Uterus (tissue), 4 donors: ENCODE measurements at regions of chr9 and their contacts with region 1.

Region 1: DNA sequence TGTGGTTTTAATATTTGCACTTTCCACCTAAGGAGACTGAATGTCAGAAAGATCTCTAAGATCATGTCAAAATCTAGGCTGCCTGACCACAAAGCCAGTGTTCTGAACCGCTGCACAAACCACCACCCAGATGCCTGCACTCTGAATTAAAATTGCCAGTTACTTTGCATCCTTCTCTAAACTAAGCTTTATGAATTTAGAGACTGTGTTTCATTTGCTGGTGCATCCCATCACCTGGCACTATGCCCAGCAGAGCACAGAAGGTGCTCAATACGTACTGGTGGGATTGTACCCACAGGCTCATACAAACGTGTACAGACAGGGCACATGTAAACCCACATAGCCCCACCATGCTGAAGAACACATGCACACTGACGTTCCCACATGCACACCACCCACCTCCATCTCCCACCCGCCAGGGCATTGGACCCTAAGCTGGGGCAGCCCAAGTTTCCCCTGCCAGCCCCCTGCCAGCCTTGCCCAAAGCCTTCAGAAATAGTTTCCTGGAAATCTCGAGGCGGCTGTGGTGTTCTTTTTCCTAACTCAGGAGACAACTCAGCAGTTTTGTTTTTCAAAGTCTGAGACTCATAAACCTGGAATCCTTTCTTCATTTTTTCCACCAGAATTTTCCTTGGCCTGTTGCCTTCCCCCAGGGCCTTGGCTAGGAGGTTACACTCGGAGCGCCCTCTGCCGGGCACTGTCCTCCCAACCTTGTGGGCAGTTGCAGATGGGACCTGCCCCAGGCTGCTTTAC is 9.6 kb upstream of the TRAF1 start:
- DNase-seq: peak; percentile 94 to 97
- H3K4me3 ChIP-seq: peak overlapping the region in 1 of 2 donors; percentile 9
- H3K27ac ChIP-seq: peak overlapping the region; percentile 83 to 92
- H3K4me1 ChIP-seq: peaks cover 12 to 15% of the 10 kb centered on the region in 2 donors
- H3K27me3 ChIP-seq: no peaks in the 10 kb centered on the region
- CTCF ChIP-seq: peak; percentile 91 to 96 (median 93)
- POLR2A ChIP-seq: no peak

Region 2: GRCh38 chr9:120434532-120434931 is 501.7 kb before region 1 on chr9:
- intact Hi-C with region 1: no loop called
- DNase-seq: no peak
- H3K4me3 ChIP-seq: no peak overlapping the region
- H3K27ac ChIP-seq: no peak overlapping the region
- H3K4me1 ChIP-seq: no peaks in the 10 kb centered on the region
- H3K27me3 ChIP-seq: no peaks in the 10 kb centered on the region
- CTCF ChIP-seq: no peak
- POLR2A ChIP-seq: no peak

Region 3: GRCh38 chr9:120875954-120876841 is 60.0 kb before region 1 on chr9:
- intact Hi-C with region 1: loop called (anchors 5 kb)
- DNase-seq: peak; percentile 88 to 89
- H3K4me3 ChIP-seq: peak overlapping the region; percentile 72 to 98
- H3K27ac ChIP-seq: peak overlapping the region; percentile 89 to 100
- H3K4me1 ChIP-seq: no peaks in the 10 kb centered on the region
- H3K27me3 ChIP-seq: no peaks in the 10 kb centered on the region
- CTCF ChIP-seq: peak in 2 of 4 experiments; percentile 2 to 11
- POLR2A ChIP-seq: peak; percentile 17 to 32

Region 4: GRCh38 chr9:121009650-121010049 is 73.5 kb after region 1 on chr9:
- intact Hi-C with region 1: no loop called
- DNase-seq: no peak
- H3K4me3 ChIP-seq: no peak overlapping the region
- H3K27ac ChIP-seq: no peak overlapping the region
- H3K4me1 ChIP-seq: no peaks in the 10 kb centered on the region
- H3K27me3 ChIP-seq: no peaks in the 10 kb centered on the region
- CTCF ChIP-seq: no peak
- POLR2A ChIP-seq: no peak